Heart left ventricle (tissue), 16 donors: ENCODE measurements at regions of chr7 and their contacts with region 1.

Region 1: DNA sequence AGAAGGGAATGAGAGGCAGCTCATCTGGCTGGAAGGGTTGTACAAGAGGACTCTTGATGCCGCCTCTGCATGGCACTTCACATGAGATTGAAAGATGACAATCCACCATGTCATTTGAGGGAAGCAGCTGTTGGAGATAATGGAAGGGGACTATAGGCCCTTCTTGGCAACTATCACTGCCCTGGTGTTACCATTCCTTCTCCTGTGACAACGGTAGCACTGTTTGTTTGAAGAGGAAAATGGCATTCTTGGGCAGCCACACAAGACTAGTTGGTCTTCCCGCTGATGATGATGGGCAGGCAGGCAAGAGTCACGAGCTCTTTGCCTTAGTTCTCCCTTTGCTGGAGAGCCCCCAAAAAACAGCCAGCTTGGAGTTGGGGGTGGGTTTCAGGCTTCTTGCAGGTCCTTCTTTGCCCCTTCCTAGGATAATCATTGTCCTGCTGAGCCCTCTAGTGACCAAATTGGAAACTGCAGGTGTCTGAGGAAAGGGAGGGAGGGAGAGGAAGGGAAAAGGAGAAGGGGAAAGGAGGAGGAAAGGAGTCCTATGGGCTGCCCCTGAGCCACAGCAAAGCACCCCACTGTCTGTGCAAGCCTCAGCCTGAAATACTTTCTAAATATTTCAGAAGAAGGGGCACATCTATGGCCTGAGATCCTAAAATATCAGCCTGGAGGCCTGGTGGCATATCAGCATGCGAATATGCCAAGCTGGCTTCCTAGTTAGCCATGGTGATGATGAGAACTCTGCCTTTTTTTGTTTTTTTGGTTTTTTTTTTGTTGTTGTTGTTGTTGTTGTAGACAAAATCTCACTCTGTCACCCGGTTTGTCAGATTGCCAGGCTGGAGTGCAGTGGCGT is 165.6 kb upstream of the KMT2E start:
- DNase-seq: peak in 3 of 5 donors; percentile 13 to 31 (median 27)
- ATAC-seq: peak in 1 of 4 donors; percentile 41
- H3K4me3 ChIP-seq: no peak overlapping the region
- H3K27ac ChIP-seq: no peak overlapping the region
- H3K4me1 ChIP-seq: no peaks in the 10 kb centered on the region
- H3K27me3 ChIP-seq: peaks cover 0 to 15% (median 0%) of the 10 kb centered on the region in 9 donors
- CTCF ChIP-seq: peak; percentile 62 to 84 (median 75)
- POLR2A ChIP-seq: no peak

Region 2: DNA sequence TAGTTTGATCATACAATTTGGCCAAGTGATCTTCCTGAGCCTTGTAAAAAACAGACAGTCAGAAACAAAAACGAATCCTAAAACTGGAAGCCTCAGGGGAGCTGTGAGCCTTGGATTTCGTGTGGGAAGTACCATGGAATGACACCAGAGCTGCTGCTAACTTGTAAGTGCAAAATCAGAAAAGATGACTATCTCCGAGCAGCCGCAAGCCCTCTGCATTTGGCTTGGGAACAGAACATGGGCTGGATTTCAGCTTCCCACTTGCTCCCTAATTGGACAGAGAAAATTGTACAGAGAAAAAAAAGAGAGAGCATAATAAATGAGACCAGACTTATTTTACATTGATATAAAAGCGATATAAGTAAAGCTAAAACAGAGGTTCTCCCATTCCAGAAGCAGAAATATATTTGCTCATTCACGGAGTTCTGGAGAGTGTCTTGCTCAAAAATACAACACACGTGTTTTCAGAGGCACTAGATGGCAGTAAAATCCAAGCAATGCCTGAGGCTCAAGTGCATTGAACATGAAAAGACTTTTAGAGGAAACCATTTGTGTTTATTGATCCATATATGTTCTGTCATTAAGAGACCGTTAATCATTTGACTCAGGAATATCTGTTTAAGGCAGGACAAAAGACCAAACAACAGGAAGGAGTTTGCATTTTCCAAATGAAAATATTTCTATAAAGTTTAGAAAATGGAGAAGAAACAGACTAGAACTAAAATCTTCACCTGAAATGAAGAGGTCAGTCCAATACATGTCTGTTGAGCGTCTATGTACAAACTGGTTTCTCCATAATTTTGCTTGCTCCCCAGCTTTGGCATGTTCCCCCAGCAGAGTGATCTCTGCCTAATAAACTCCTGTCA is 1324.1 kb before region 1 on chr7:
- intact Hi-C with region 1: loop called in 1 of 10 experiments (anchors 5 kb)
- DNase-seq: no peak
- ATAC-seq: peak in 2 of 4 donors; percentile 47 to 63
- H3K4me3 ChIP-seq: no peak overlapping the region
- H3K27ac ChIP-seq: no peak overlapping the region
- H3K4me1 ChIP-seq: no peaks in the 10 kb centered on the region
- H3K27me3 ChIP-seq: peaks cover 0 to 8% (median 0%) of the 10 kb centered on the region in 9 donors
- CTCF ChIP-seq: peak in 9 of 12 donors; percentile 12 to 53 (median 42)
- POLR2A ChIP-seq: no peak

Region 3: GRCh38 chr7:103573479-103574058 is 1274.8 kb before region 1 on chr7:
- intact Hi-C with region 1: loop called in 1 of 10 experiments (anchors 5 kb)
- DNase-seq: no peak
- ATAC-seq: no peak
- H3K4me3 ChIP-seq: no peak overlapping the region
- H3K27ac ChIP-seq: no peak overlapping the region
- H3K4me1 ChIP-seq: peaks cover 0 to 7% (median 0%) of the 10 kb centered on the region in 12 donors
- H3K27me3 ChIP-seq: peaks cover 0 to 5% (median 0%) of the 10 kb centered on the region in 9 donors
- CTCF ChIP-seq: peak; percentile 53 to 73 (median 62)
- POLR2A ChIP-seq: no peak

Region 4: DNA sequence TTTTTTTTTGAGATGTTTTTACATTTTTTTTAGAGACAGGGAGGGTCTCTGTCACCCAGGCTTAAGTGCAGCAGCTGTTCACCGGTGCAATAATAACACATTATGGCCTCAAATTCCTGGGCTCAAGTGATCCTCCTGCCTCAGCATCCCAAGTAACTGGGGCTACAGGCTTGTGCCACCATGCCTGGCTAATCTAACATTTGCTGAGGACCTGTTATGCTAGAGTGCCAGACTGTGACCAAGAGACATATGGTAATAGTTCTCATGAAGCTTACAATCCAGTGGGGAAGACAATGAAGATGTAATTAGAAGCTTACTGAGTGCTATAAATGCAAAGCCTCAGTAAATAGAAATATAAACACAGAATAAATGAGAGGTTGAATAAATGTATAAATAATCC is 622.9 kb before region 1 on chr7:
- intact Hi-C with region 1: loop called in 8 of 10 experiments (anchors 2 to 10 kb)
- DNase-seq: no peak
- ATAC-seq: no peak
- H3K4me3 ChIP-seq: no peak overlapping the region
- H3K27ac ChIP-seq: no peak overlapping the region
- H3K4me1 ChIP-seq: no peaks in the 10 kb centered on the region
- H3K27me3 ChIP-seq: no peaks in the 10 kb centered on the region
- CTCF ChIP-seq: no peak
- POLR2A ChIP-seq: no peak

Region 5: GRCh38 chr7:104231054-104232046 is 617.0 kb before region 1 on chr7:
- intact Hi-C with region 1: loop called (anchors 2 to 10 kb)
- DNase-seq: peak in 3 of 5 donors; percentile 20 to 48 (median 32)
- ATAC-seq: peak; percentile 26 to 86 (median 68)
- H3K4me3 ChIP-seq: no peak overlapping the region
- H3K27ac ChIP-seq: no peak overlapping the region
- H3K4me1 ChIP-seq: peaks cover 0 to 7% (median 0%) of the 10 kb centered on the region in 12 donors
- H3K27me3 ChIP-seq: peaks cover 0 to 14% (median 4%) of the 10 kb centered on the region in 9 donors
- CTCF ChIP-seq: peak; percentile 65 to 85 (median 74)
- POLR2A ChIP-seq: no peak

Region 6: GRCh38 chr7:104272767-104273384 is 575.5 kb before region 1 on chr7:
- intact Hi-C with region 1: loop called in 2 of 10 experiments (anchors 5 to 10 kb)
- DNase-seq: no peak
- ATAC-seq: no peak
- H3K4me3 ChIP-seq: no peak overlapping the region
- H3K27ac ChIP-seq: no peak overlapping the region
- H3K4me1 ChIP-seq: no peaks in the 10 kb centered on the region
- H3K27me3 ChIP-seq: no peaks in the 10 kb centered on the region
- CTCF ChIP-seq: peak in 11 of 12 donors; percentile 27 to 57 (median 42)
- POLR2A ChIP-seq: no peak

Region 7: DNA sequence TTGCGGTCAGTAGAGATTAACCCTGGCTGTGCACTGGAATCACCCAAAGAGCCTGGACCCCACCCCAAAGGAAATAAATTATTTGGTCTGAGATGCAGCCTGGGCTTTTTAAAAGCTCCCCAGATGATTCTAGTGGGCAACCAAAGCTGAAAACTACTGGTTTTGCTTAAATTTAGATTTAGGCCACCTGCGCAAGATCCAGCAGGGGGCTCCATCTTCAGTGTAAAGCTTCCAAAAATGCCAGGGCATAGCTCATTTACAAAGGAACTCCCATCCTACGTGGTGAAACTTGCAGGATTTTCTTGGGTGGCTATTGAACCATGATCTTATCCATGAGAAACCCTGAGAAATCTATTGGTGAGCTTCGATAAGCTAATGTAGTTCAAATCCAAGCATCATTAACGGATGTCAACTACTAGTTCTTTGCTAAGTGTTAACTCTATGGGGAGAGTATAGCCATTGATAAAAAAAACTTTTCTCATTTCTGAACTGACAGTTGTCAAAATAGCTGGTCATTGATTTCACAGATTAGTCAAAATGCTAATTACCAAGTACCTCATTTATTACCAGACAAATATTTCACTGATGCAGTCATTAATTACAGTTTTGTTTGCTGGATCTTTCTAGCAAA is 204.7 kb before region 1 on chr7:
- intact Hi-C with region 1: loop called in 1 of 10 experiments (anchors 10 kb)
- DNase-seq: no peak
- ATAC-seq: no peak
- H3K4me3 ChIP-seq: no peak overlapping the region
- H3K27ac ChIP-seq: no peak overlapping the region
- H3K4me1 ChIP-seq: no peaks in the 10 kb centered on the region
- H3K27me3 ChIP-seq: peaks cover 0 to 15% (median 0%) of the 10 kb centered on the region in 9 donors
- CTCF ChIP-seq: peak in 6 of 12 donors; percentile 15 to 35 (median 24)
- POLR2A ChIP-seq: no peak